Right cardiac atrium (tissue), 5 donors: ENCODE measurements at regions of chr6 and their contacts with region 1.

Region 1: DNA sequence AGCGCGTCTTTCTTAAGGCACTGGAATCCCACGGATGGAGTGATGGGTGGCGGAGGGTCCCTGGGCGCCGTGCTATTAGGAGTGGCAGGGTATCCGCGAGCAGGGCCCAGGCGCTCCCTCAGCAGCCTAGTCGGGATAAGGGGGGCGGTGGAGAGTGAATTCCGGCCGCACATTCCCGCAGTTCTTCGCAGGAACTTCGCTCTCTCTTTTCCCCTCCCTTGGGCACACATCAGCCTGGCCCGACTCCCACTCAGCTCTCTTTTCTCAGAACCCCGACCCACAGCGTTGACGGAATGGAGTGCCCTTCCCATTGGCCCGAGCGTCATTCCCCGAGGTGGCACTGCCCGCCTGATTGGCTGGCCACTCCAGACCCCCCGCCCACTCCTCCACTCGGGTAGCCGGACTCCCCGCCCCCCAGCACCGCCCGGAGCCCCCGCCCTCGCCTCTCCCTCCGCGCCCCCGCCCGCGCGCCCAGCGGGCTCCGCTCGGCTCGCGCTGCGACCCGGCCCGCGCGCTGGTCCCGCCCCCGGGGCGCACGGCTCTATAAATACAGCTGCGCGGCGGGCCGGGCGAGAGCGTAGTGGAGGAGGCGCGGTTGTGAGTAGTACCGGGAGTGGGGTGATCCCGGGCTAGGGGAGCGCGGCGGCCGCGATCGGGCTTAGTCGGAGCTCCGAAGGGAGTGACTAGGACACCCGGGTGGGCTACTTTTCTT is at the start of gene ID4:
- DNase-seq: peak; percentile 98 to 99 (median 99)
- ATAC-seq: peak; percentile 94 to 96
- H3K4me3 ChIP-seq: peak within 1 kb of the TSS; percentile 82
- H3K27ac ChIP-seq: peak within 1 kb of the TSS; percentile 97
- H3K4me1 ChIP-seq: no peaks in the 10 kb centered on the region
- H3K27me3 ChIP-seq: no peaks in the 10 kb centered on the region
- total RNA-seq, gene ID4: 32.3 to 74.5 (median 36.8) TPM

Region 2: DNA sequence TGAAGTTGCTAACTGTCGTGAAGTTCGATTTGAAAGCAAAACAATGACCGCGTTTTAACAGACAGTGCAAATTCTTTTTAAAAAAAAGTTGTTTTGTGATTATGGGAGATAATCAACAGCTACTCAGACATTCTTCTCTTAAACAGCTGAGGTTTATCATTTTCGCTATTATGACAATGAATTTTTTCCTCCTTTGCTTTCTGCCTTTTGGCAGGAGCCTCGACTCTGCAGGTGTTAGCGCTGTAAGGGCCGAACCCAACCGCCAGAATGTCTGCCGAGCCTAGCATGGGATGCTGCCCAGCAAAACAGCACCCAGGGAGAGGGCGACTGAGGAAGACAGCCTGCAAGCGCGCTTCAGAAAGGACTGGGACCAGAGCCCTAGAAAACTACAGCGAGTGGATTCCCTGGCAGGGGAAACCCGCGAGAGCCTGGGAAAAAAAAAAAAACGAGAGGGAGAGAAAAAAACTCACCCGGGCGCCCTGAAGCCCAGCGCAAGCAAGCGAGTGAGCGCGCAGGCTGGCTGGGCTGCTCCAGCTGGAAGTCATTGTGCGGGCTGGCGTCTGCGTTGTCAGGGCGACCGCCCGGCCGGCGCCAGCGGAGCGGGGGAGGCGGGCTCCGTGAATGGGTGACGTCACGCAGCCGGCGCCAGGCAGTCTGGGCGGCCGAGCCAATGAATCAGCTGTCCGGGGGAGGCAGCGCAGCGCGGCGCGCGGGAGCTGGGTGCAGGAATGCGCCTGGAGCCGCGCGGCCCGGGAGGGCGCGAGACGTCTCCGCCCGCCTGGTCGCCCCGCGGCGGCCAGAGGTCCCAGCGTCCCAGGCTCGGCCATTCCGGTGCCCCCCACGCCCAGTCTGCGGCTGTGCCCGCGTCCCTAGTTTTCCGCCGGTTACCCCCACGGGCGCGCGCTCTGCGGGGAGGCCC is 32.5 kb before region 1 on chr6:
- intact Hi-C with region 1: loop called in 1 of 4 experiments (anchors 2 kb)
- DNase-seq: peak; percentile 98 to 99 (median 99)
- ATAC-seq: peak; percentile 99
- H3K4me3 ChIP-seq: peak overlapping the region; percentile 57
- H3K27ac ChIP-seq: peak overlapping the region; percentile 98
- H3K4me1 ChIP-seq: peaks cover 5% of the 10 kb centered on the region
- H3K27me3 ChIP-seq: no peaks in the 10 kb centered on the region

Region 3: GRCh38 chr6:20386218-20386617 is 549.3 kb after region 1 on chr6:
- intact Hi-C with region 1: no loop called
- DNase-seq: no peak
- ATAC-seq: no peak
- H3K4me3 ChIP-seq: no peak overlapping the region
- H3K27ac ChIP-seq: no peak overlapping the region
- H3K4me1 ChIP-seq: no peaks in the 10 kb centered on the region
- H3K27me3 ChIP-seq: no peaks in the 10 kb centered on the region